ENCODE measurements at regions of chr2 and their contacts with region 1.

Region 1: DNA sequence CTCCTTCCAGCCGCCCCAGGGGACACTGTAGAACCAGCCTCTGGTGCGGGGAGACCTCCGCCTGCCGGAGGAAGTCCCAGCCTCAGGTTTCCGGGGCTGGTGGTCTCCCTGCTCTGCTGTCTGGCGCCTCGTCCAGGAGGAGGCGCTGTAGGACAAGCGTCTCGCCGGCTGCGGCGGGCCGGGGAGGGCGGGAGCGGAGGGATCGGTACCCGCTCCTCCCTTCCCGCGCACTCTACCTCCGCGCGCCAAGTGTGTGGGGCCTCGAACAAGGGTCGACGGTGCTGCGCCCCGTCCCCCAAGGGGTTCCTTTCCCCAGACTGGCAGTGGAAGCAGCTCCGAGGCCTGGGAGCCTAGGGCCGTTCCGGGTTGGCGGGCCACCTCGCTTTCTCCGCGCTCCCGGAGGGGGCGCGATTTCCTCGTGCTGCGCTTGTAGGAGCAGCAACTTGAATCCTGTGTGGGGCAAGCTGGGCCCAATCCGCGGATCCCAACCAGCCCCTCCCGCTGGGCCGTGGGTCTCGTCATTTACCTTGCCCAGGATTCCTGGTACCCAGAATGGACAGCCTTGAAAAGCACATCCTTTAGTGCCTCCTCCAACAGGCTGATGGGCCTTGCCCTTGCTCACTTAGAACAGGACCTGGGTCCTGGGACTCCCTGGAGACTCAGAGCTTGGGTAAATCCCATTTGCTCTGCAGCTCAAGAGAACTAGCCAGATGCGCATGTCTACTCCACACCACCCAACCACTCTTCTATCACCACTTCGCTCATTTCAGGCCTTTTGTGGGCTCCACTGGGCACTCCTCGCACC is 10.6 kb upstream of the HOXD4 start:
- DNase-seq: peak; percentile 87
- H3K4me3 ChIP-seq: peak overlapping the region; percentile 39 to 52 (median 50)
- H3K27ac ChIP-seq: peak overlapping the region; percentile 49 to 87 (median 54)
- H3K4me1 ChIP-seq: peaks cover 0 to 30% (median 24%) of the 10 kb centered on the region in 4 donors
- H3K27me3 ChIP-seq: peaks cover 3 to 69% (median 51%) of the 10 kb centered on the region in 3 donors
- CTCF ChIP-seq: peak; percentile 87 to 96 (median 95)
- EP300 ChIP-seq: no peak
- POLR2A ChIP-seq: no peak

Region 2: DNA sequence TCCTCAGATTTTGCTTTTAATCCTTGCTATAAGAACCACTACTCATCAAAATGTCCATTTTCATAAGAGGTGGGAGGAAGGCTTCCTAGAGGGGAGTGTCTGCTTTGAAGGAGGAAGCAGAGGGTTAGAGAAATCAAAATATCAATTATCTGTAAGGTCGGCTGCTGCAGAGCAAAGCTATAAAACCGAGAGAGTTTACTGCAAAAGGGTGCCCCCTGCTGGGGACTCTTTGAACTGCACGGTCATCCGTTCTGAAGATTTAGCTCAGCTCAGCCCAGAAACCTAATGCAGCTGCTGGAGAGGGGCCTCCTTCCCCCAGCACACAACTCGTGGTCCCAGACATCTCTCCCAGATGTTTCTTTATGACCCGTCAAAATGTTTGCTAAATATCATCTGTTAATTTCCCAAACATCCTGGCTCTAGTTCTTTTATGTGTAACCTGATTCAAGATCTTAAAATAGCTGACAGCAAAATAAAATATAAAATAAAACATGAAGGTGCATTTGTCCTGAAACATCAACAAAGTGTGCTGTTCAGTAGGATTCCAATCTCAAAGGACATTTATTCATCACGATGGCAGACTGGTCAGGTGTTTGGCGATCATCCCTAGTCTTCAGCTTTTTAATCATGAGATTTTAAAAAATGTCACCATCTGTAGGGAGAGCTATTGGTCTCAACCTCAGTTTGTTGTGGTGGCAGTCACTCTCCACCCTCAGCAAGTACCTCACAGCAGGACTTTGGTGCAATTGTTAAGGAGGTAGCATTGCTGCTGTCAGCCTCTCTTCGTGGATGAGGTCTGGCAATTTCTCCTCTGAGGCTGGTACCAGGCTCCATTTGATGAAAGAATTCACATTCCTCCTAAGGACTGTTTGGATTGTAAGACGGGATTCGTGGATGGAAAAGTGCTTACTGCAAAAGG is 314.4 kb after region 1 on chr2:
- intact Hi-C with region 1: loop called (anchors 1 kb)
- DNase-seq: peak; percentile 92
- H3K4me3 ChIP-seq: no peak overlapping the region
- H3K27ac ChIP-seq: peak overlapping the region; percentile 36 to 59 (median 53)
- H3K4me1 ChIP-seq: peaks cover 0 to 12% (median 0%) of the 10 kb centered on the region in 4 donors
- H3K27me3 ChIP-seq: no peaks in the 10 kb centered on the region
- CTCF ChIP-seq: peak; percentile 48 to 93 (median 82)
- EP300 ChIP-seq: no peak
- POLR2A ChIP-seq: no peak

Region 3: DNA sequence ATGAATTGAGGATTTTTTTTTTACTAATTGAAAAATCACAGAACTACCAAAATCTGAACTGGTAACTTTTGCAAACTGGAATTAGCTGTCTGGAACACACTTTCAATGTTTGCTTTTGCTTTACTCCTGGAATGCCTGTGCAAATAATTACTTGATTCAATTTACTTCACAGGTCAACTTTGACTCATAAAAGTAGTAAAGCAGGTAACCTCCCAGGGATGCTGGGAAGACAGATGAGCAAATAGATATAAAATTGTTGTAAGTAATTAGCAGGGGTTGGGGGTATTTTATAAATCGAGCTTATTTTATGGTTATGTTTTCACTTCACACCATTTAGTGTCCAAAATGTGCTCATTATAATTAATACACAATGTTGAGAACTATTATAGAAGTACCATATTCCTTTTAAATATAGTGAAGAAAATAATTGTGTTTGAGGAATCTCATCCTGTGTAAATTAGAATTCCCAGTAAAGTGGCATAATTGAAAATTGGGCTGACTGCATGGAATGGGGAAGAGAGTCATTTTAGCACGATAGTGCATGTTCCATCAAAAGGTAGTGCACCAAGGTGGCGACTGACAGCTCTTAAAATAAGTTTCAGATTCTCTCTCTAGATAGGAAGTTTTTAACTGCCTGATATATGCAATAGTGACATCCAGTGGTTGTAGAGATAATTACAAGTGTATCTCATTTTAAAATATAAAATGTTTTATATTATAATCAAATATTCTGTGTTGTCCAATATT is 673.8 kb after region 1 on chr2:
- intact Hi-C with region 1: loop called (anchors 10 kb)
- DNase-seq: no peak
- H3K4me3 ChIP-seq: no peak overlapping the region
- H3K27ac ChIP-seq: no peak overlapping the region
- H3K4me1 ChIP-seq: peaks cover 0 to 6% (median 2%) of the 10 kb centered on the region in 4 donors
- H3K27me3 ChIP-seq: no peaks in the 10 kb centered on the region
- CTCF ChIP-seq: peak in 3 of 4 experiments; percentile 32 to 65 (median 34)
- EP300 ChIP-seq: no peak
- POLR2A ChIP-seq: no peak